Activated B cell treated with CpG ODN at 0.5 μM for 24 hours (primary cell): ENCODE measurements at regions of chr10 and their contacts with region 1.

Region 1: DNA sequence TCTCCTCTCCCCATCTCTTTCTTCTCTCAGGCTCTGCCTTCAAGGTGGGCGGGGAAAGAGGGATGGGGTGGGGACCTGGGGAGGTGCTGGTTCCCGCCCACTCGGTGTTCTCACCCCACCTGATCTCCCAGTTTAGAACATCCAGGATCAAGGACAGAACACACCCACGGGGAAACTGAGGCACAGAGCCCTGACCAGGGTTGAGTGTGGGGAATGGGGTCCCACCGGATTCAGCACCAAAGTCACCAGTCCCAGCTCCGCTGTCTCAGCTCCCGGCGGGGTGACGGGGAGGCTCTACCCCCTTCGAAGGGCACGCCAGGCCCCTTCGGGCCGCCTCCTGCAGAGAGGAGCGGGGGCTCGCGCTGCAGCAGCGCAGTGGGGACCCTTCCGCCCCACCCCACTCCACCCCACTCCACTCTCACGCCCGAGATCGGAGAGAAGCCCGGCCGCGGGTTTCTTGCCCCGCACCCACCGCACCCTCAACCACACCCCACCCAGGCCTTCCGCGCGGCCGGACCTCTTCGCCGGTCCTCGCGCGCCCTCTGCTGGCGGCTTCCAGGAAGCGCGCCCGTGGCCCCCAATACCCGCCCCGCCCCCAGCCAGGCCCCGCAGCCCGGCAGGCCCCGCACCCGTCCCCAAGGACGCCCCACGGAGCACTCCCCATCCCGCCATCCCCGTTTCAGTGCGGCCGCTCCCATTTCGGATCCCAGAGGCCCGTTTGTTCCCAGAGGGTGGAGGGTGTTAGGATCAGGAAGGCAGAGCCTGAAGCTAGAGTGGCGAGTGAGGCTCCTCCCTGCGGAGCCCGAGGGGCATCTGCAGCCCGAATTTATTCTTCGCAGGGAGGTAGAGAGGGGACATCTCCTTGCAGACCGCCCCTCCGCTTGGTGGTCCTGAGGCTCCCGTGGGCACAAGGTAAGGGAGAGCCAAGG is 18.0 kb downstream of the POLL start:
- DNase-seq: peak; percentile 83
- ATAC-seq: peak; percentile 89
- H3K4me3 Mint-ChIP-seq: peak overlapping the region; percentile 84
- H3K27ac Mint-ChIP-seq: no peak overlapping the region
- H3K4me1 Mint-ChIP-seq: peaks cover 22% of the 10 kb centered on the region
- H3K27me3 Mint-ChIP-seq: peaks cover 40% of the 10 kb centered on the region
- CTCF ChIP-seq: no peak

Region 2: DNA sequence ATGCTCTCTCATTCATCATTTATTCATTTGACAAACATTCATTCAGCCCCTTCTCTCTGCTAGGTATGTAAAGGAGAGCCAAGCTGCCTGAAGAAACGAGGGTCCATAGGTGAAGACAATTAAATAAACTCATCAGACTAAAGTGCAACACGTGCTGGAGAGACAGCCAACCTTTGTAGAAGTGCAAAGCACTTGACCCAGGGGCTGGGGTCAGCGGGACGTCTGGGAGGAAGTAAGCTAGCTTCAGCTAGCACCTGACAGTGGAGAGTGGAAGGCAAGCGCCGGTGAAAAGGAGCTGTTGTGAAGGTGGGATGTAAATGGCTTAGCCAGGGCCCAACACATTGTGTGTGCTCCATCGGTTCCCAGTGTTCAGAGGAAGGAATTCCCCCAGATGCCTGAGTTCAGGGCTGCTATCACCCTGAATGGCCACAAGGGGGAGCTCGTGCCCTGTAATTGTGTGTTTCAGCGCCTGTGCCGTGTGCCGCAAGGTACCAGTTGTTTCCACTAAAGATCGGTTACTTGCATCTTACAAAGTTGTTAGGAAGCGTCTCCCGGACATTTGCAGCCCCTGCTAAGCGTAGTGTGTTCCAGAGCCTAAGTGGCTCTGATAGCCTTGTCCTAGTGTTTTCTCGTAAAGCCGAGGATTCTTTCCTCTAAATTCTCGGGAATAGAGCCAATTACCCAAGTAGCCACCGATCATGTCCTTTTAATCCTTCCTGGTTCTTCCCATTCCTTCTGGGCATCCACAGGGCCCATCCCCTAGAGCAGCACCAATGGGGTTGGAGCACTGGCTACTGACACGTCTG is 408.4 kb before region 1 on chr10:
- CTCF ChIA-PET with region 1: interaction called, 9 read pairs
- POLR2A ChIA-PET with region 1: no interaction called
- intact Hi-C with region 1: loop called (anchors 1 kb)
- DNase-seq: peak; percentile 47
- ATAC-seq: peak; percentile 94
- H3K4me3 Mint-ChIP-seq: no peak overlapping the region
- H3K27ac Mint-ChIP-seq: no peak overlapping the region
- H3K4me1 Mint-ChIP-seq: peaks cover 15% of the 10 kb centered on the region
- H3K27me3 Mint-ChIP-seq: peaks cover 59% of the 10 kb centered on the region
- CTCF ChIP-seq: peak; percentile 32

Region 3: DNA sequence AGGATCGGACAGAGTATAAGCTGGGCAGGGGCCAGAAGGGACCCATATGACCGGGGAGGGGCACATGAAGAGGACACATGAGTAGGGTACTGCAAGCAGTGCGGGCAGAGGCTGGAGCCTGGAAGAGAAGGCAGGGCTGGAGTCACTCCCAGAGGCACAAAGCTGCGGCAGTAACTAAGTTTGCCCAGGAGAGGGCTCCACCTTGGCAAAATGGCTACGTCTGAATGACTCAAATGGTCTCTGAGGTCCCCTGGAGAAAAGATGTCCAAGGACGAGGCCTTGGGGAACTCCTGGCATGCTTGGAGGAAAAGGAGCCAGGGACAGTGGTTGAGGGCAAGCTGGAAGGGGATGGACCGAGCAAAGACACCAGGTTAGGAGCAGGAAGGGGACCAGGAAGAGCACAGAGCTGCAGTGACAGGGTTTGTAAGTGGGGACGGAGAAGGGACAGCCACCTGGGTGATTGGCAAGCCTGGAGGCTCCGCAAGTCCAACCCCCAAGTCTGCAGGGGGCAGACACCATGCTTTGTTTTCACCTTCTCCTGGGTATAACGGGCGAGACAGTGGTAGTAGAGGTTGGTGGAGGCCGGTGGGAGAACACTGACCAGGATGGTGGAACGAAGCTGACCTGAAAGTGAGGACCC is 297.8 kb before region 1 on chr10:
- CTCF ChIA-PET with region 1: interaction called, 9 read pairs
- POLR2A ChIA-PET with region 1: no interaction called
- intact Hi-C with region 1: loop called (anchors 1 kb)
- DNase-seq: peak; percentile 41
- ATAC-seq: peak; percentile 67
- H3K4me3 Mint-ChIP-seq: no peak overlapping the region
- H3K27ac Mint-ChIP-seq: no peak overlapping the region
- H3K4me1 Mint-ChIP-seq: no peaks in the 10 kb centered on the region
- H3K27me3 Mint-ChIP-seq: peaks cover 40% of the 10 kb centered on the region
- CTCF ChIP-seq: no peak

Region 4: GRCh38 chr10:101467286-101467770 is 102.8 kb before region 1 on chr10:
- CTCF ChIA-PET with region 1: interaction called, 3 read pairs
- POLR2A ChIA-PET with region 1: no interaction called
- intact Hi-C with region 1: loop called (anchors 2 kb)
- DNase-seq: no peak
- ATAC-seq: peak; percentile 78
- H3K4me3 Mint-ChIP-seq: no peak overlapping the region
- H3K27ac Mint-ChIP-seq: no peak overlapping the region
- H3K4me1 Mint-ChIP-seq: peaks cover 7% of the 10 kb centered on the region
- H3K27me3 Mint-ChIP-seq: no peaks in the 10 kb centered on the region
- CTCF ChIP-seq: peak; percentile 94

Region 5: GRCh38 chr10:101587725-101588653 is 17.9 kb after region 1 on chr10 and contains the starts of genes DPCD and POLL:
- CTCF ChIA-PET with region 1: interaction called, 14 read pairs
- POLR2A ChIA-PET with region 1: interaction called, 10 read pairs
- intact Hi-C with region 1: loop called (anchors 1 kb)
- DNase-seq: peak; percentile 83
- ATAC-seq: peak; percentile 97
- H3K4me3 Mint-ChIP-seq: peak within 1 kb of the TSS; percentile 92
- H3K27ac Mint-ChIP-seq: peak within 1 kb of the TSS; percentile 80
- H3K4me1 Mint-ChIP-seq: peaks cover 19% of the 10 kb centered on the region
- H3K27me3 Mint-ChIP-seq: no peaks in the 10 kb centered on the region
- CTCF ChIP-seq: no peak
- total RNA-seq, gene DPCD: 2.3 and 2.9 TPM in 2 replicates
- total RNA-seq, gene POLL: 35.0 and 39.5 TPM in 2 replicates

Region 6: DNA sequence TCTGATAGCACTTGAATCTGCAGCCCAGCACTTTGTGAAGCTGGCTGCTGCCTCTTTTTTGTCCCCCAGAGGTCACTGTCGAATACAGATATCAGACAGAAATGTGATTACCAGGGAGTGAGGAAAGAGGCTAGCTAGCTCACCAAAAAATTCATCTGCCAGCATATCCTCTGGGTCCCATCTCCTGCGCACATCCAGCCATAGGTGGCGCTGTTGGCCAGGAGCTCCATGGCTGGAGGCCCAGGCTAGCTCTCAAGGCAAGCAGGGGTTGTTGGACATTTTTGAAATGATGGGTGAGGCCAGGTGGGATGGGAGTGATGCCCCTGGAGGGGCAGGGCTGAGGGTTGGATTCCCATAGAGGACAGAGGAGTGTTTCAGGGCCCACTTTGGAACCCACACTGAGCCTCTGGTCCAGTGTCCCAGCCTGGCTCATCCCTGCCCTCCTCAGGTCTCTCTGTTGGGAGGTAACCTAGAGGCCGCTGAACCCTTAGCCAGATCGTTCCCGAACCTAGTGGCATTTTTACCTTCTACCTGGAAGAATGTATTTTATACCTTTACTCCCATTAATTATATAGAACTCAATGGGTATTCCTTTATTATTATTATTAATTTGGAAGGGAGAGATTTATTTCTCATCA is 32.8 kb after region 1 on chr10:
- CTCF ChIA-PET with region 1: no interaction called
- POLR2A ChIA-PET with region 1: no interaction called
- intact Hi-C with region 1: no loop called
- DNase-seq: peak; percentile 36
- ATAC-seq: peak; percentile 75
- H3K4me3 Mint-ChIP-seq: no peak overlapping the region
- H3K27ac Mint-ChIP-seq: no peak overlapping the region
- H3K4me1 Mint-ChIP-seq: no peaks in the 10 kb centered on the region
- H3K27me3 Mint-ChIP-seq: no peaks in the 10 kb centered on the region
- CTCF ChIP-seq: no peak